ENCODE measurements at regions of chr11 and their contacts with region 1.

Region 1: DNA sequence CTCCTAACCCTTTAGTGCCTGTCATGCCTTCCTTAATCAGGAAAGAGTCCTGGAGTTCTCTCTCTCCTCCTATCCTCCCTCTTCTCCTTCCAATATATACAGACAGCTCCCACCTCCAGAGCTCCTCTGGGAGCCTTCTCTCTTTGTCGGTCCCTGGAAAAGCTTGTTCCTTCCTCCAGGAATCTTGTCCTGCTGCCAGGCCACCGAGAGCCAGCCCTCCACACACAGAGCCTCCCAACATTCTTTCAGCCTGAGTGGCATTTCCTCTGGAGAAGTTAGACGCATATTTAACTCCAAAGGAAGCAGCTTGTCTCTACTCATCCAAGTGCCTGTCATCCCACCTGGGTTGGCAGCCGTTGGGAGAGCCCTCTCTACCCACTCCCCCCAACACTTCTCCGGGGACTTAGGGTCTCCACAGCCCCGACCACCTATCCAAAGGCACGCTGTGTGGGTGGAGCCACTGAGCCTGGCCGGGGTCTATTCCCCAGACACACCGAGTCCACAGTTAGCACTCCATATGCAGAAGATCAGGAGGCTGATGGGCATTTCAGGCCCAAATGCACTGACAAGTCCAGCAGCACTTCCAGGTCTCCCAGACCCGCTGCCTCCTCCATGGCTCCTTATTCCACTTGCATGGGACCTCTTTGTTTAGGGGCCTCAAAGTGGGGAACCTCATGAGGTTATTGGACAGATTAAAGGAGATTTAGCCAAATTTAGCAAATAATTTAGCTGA is 31.1 kb downstream of the DKK3 start:
- DNase-seq: no peak
- H3K4me3 Mint-ChIP-seq: no peak overlapping the region
- H3K27ac Mint-ChIP-seq: no peak overlapping the region
- H3K4me1 Mint-ChIP-seq: no peaks in the 10 kb centered on the region
- H3K27me3 Mint-ChIP-seq: no peaks in the 10 kb centered on the region

Region 2: DNA sequence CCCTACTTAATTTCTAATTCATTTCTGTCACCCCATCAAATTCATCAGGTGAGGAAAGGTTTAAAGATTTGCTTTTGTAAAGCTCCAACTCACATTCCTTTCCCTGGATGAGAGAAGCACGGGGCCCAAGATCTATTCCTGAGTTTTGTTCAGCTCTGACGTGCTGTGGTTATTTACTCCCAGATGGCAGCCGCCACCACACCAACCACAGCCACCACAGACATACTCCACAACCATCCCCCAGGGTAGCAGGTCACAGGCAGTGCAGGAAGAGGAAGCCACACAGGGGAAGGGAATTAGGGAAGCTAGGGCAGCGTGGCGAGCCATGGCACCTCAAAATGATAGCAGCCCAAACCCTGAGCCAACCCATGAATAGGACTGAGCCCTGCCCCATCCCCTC is 560.9 kb before region 1 on chr11:
- CTCF ChIA-PET with region 1: no interaction called
- intact Hi-C with region 1: no loop called
- DNase-seq: no peak
- H3K4me3 Mint-ChIP-seq: no peak overlapping the region
- H3K27ac Mint-ChIP-seq: no peak overlapping the region
- H3K4me1 Mint-ChIP-seq: no peaks in the 10 kb centered on the region
- H3K27me3 Mint-ChIP-seq: peaks cover 9% of the 10 kb centered on the region

Region 3: DNA sequence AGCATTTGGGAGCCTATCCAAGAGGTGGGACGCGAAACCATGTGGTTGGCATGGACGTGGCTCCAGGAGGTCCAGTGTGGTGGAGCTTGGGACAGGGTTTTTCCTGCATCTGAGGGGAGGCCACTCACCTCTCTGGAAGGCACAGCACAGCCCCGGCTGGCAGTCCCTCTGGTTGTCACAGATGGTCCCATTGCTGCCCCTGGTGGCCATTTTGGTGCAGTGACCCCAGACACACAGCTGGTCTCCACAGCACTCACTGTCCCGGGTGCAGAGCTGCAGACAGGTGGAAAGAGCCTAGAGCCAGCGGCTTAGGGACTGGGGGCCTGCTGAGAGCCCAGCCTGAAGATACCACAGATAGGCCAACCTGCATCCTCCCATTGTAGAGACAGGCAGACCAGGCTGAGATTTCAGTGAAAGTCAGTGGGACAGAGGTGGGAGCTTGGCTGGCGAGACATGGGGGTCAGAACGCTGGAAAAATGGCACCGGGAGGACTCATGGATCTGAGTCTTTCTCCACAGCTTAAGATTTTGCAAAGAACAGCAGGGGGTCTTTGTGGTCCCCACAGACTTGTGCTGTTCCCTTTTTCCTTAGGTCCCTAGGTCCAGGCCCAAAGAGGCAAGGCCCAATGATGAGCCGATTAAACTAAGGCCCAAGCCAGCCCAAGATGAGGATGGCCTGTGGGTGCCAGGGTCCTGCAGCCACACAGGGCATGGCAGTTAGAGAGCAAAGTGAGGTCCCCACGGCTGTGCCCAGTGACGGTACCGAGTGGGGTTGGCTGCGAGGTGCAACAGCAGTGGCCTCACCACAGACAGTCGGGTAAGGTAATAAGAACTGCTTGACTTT is 10.3 kb before region 1 on chr11:
- CTCF ChIA-PET with region 1: interaction called, 11 read pairs
- intact Hi-C with region 1: no loop called
- DNase-seq: peak; percentile 83
- H3K4me3 Mint-ChIP-seq: no peak overlapping the region
- H3K27ac Mint-ChIP-seq: no peak overlapping the region
- H3K4me1 Mint-ChIP-seq: peaks cover 6% of the 10 kb centered on the region
- H3K27me3 Mint-ChIP-seq: no peaks in the 10 kb centered on the region

Region 4: DNA sequence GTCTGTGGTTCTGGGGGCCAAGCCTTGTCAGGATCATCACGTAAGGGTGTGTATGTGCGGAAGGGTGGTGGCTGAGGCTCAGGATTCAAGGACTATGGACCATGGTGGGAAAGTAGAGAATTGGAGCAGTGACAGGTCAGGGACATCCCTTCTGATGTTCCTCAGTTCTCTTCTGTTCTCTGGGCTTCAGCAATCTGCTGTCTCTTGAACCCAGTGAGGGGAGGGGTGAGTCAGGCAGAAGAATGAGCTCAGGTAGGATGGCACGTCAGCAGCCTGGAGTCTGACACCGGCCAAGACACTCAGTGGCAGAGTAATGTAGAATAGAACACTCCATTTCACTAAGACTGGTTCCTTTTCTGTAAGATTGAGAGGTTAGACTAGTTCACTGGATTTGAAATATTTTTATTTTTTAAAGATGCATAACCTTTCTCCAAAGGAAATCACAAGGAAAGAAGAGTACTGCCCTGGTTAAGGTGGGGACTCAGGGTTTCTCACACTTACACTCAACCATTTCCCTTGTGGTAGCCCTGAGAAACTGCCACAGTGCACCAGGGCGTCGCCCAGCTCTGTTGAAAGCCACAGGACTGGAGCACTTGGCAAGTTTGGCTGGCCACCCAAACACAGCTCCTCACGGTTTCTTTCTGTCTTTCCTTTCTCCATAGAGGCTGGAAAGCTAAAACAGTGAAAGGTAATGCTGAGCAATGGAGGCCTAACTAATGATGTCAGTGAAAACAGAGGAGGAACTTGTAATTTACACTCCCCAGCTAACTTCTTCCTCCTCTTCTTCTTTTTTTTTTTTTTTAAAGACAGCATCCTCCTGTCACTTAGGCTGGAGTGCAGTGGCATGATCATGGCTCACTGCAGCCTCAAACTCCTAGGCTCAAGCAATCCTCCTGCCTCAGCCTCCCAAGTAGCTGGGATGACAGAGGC is 110.0 kb after region 1 on chr11:
- CTCF ChIA-PET with region 1: no interaction called
- intact Hi-C with region 1: no loop called
- DNase-seq: peak; percentile 37
- H3K4me3 Mint-ChIP-seq: no peak overlapping the region
- H3K27ac Mint-ChIP-seq: no peak overlapping the region
- H3K4me1 Mint-ChIP-seq: peaks cover 41% of the 10 kb centered on the region
- H3K27me3 Mint-ChIP-seq: no peaks in the 10 kb centered on the region